ENCODE measurements at regions of chr4 and their contacts with region 1.

Region 1: DNA sequence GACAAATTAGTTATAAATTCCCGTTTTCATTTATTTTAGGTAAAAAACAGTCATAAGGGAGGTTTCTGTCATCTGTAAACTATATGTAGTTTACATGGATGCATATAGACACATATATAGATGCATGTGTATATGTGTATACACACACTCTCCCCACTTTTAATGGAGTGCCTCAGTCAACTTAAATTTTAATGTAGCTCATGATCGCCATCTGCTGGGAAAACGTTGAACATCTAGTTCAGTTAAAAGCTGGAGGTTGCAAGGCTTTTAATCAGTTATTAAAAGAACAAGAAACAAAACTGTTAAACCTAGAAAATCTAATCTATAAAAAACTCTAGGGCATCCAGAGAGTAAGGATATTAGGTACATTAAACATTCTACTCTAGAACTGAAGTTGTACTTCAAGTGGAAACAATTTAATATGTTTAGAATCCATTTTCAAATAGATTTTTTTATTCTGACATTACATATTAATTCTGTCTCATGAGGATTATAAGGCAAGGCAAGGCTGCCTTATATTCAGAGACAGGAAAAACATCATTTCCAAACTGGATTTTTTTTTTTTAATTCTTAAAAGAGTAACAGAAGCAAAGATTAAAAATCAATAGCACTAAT is 122.6 kb downstream of the SHISA3 start:
- DNase-seq: peak in 3 of 5 donors; percentile 48 to 82 (median 80)
- H3K4me3 ChIP-seq: no peak overlapping the region
- H3K27ac ChIP-seq: no peak overlapping the region
- H3K4me1 ChIP-seq: no peaks in the 10 kb centered on the region
- H3K27me3 ChIP-seq: no peaks in the 10 kb centered on the region
- CTCF ChIP-seq: peak; percentile 67

Region 2: DNA sequence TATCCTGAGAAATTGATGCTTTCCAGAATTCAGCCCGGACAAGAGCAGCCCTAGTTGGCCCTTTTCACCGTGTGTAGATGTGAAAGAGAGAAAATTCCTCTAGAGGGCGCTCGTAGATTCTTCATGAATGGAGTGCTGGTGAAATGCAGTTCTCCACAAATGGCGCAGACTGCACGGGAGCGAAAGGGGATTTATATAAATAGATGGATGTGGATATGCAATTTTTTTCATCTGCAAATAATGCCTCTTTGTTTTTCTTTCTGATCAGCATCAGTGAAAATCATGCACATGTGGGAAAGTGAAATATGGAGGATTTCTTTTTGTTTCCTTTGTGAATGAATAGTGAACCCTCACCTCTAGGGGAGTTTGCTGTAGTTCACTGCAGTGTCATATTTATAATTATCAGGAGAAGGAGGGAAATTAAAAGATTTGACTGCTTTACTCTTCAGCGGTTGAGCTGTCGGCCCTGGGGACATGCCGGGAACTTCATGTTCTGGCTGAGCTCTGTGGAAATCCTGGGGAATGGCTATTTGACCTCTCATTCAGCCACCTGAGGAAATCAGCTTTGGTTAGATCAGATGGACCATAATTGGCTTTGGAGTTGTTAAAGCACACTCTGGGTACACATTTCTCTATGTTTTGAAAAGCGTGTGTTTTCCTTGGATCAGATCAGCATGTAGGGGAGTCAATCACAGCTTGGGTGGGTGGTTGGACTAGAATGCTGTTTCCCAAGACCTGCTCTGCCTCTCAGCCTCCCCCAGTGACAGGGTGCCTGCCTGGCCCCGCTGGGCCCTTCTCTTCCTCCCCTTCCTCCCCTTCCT is 237.6 kb before region 1 on chr4:
- intact Hi-C with region 1: loop called (anchors 5 kb)
- DNase-seq: peak in 4 of 5 donors; percentile 70 to 96 (median 84)
- H3K4me3 ChIP-seq: peak overlapping the region in 2 of 3 donors; percentile 36 to 37
- H3K27ac ChIP-seq: no peak overlapping the region
- H3K4me1 ChIP-seq: no peaks in the 10 kb centered on the region
- H3K27me3 ChIP-seq: no peaks in the 10 kb centered on the region
- CTCF ChIP-seq: peak; percentile 77

Region 3: GRCh38 chr4:42385516-42385915 is 134.4 kb before region 1 on chr4:
- intact Hi-C with region 1: loop called (anchors 10 kb)
- DNase-seq: peak in 2 of 5 donors; percentile 43 to 70
- H3K4me3 ChIP-seq: no peak overlapping the region
- H3K27ac ChIP-seq: no peak overlapping the region
- H3K4me1 ChIP-seq: no peaks in the 10 kb centered on the region
- H3K27me3 ChIP-seq: no peaks in the 10 kb centered on the region
- CTCF ChIP-seq: no peak